ENCODE measurements at regions of chrX and their contacts with region 1.

Region 1: GRCh38 chrX:66015152-66015831 is 24.6 kb downstream of the VSIG4 start:
- DNase-seq: peak; percentile 92 to 99 (median 99)
- H3K4me3 ChIP-seq: peak overlapping the region; percentile 49 to 89 (median 77)
- H3K27ac ChIP-seq: peak overlapping the region; percentile 65 to 90
- H3K4me1 ChIP-seq: peaks cover 68 to 91% (median 84%) of the 10 kb centered on the region in 4 experiments
- H3K27me3 ChIP-seq: no peaks in the 10 kb centered on the region

Region 2: GRCh38 chrX:65985922-65986588 is 29.2 kb before region 1 on chrX:
- CTCF ChIA-PET with region 1: interaction called, 59 read pairs
- POLR2A ChIA-PET with region 1: interaction called, 6 read pairs
- DNase-seq: peak; percentile 80 to 96 (median 95)
- H3K4me3 ChIP-seq: peak overlapping the region in 2 of 7 experiments; percentile 4 to 51
- H3K27ac ChIP-seq: peak overlapping the region in 1 of 2 experiments; percentile 74
- H3K4me1 ChIP-seq: peaks cover 10 to 43% (median 37%) of the 10 kb centered on the region in 4 experiments
- H3K27me3 ChIP-seq: no peaks in the 10 kb centered on the region

Region 3: DNA sequence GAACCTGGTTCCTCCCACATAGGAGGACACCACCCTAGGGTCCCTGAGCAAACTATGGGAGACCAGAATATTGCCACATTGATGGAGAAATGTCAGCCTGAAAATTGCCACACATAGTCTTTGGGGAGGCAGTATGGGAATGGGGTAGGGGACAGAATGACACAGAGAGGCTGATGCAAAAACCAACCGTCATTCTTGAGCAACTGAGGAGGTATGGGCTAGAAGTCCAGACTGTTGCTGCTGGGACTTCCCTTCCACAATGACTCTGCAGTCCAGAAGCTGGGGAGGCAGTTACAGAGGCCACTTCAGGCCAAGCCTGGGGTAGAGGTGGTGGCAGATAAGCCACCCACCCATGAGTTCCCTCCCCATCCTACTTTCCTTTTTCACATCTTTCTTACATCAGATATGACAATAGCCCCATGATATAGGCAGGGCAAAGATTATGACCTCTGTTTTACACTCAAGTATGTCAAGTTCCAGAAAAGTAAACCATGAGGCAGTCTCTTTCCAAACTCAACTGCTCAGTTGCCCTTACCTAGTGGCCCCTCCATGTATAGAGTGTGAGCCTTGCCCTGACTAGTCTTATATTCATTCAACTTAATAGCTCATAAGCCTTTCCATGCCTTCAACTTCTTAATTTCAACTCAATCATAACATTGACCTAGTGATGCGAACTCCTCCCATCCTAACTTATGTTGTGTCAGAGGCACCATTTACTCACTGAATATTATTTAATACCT is 17.1 kb before region 1 on chrX:
- CTCF ChIA-PET with region 1: interaction called, 52 read pairs
- POLR2A ChIA-PET with region 1: interaction called, 76 read pairs
- DNase-seq: peak; percentile 55 to 94 (median 92)
- H3K4me3 ChIP-seq: peak overlapping the region in 1 of 7 experiments; percentile 28
- H3K27ac ChIP-seq: peak overlapping the region; percentile 60 to 90
- H3K4me1 ChIP-seq: peaks cover 41 to 89% (median 64%) of the 10 kb centered on the region in 4 experiments
- H3K27me3 ChIP-seq: no peaks in the 10 kb centered on the region

Region 4: GRCh38 chrX:66004928-66005829 is 10.1 kb before region 1 on chrX:
- CTCF ChIA-PET with region 1: interaction called, 52 read pairs
- POLR2A ChIA-PET with region 1: interaction called, 76 read pairs
- DNase-seq: peak; percentile 71 to 93 (median 88)
- H3K4me3 ChIP-seq: peak overlapping the region in 4 of 7 experiments; percentile 9 to 48 (median 18)
- H3K27ac ChIP-seq: peak overlapping the region; percentile 20 to 75
- H3K4me1 ChIP-seq: peaks cover 65 to 89% (median 80%) of the 10 kb centered on the region in 4 experiments
- H3K27me3 ChIP-seq: no peaks in the 10 kb centered on the region

Region 5: GRCh38 chrX:66046612-66047235 is 31.4 kb after region 1 on chrX:
- CTCF ChIA-PET with region 1: no interaction called
- POLR2A ChIA-PET with region 1: no interaction called
- DNase-seq: peak; percentile 24 to 86 (median 78)
- H3K4me3 ChIP-seq: no peak overlapping the region
- H3K27ac ChIP-seq: no peak overlapping the region
- H3K4me1 ChIP-seq: peaks cover 4 to 25% (median 12%) of the 10 kb centered on the region in 4 experiments
- H3K27me3 ChIP-seq: no peaks in the 10 kb centered on the region

Region 6: DNA sequence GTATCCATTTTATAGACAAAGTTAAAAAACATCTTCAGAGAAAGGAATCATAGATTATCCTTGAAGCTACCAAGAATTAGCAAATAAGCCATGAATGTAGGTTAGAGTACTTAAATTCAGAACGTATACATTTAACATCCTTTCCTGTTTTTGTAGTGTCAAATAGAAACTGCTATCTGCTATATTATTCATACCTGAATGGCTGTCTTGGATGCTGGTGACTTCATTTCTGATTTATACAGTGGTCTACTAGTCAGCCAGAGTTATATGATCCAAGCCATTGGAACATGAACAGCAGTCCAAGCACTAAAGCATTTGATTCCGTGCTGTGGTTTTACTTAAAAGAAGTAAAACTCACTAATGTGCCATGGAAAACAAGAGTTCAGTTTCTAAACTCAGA is 82.9 kb after region 1 on chrX:
- CTCF ChIA-PET with region 1: no interaction called
- POLR2A ChIA-PET with region 1: no interaction called
- DNase-seq: no peak
- H3K4me3 ChIP-seq: no peak overlapping the region
- H3K27ac ChIP-seq: no peak overlapping the region
- H3K4me1 ChIP-seq: no peaks in the 10 kb centered on the region
- H3K27me3 ChIP-seq: no peaks in the 10 kb centered on the region

Measured in common myeloid progenitor, CD34-positive (primary cell).